ENCODE measurements at regions of chrX and their contacts with region 1.

Region 1: GRCh38 chrX:124388562-124388961 is 42.2 kb downstream of the SH2D1A start:
- DNase-seq: peak; percentile 84
- H3K4me3 Mint-ChIP-seq: no peak overlapping the region
- H3K27ac Mint-ChIP-seq: no peak overlapping the region
- H3K4me1 Mint-ChIP-seq: peaks cover 9% of the 10 kb centered on the region
- H3K27me3 Mint-ChIP-seq: no peaks in the 10 kb centered on the region

Region 2: DNA sequence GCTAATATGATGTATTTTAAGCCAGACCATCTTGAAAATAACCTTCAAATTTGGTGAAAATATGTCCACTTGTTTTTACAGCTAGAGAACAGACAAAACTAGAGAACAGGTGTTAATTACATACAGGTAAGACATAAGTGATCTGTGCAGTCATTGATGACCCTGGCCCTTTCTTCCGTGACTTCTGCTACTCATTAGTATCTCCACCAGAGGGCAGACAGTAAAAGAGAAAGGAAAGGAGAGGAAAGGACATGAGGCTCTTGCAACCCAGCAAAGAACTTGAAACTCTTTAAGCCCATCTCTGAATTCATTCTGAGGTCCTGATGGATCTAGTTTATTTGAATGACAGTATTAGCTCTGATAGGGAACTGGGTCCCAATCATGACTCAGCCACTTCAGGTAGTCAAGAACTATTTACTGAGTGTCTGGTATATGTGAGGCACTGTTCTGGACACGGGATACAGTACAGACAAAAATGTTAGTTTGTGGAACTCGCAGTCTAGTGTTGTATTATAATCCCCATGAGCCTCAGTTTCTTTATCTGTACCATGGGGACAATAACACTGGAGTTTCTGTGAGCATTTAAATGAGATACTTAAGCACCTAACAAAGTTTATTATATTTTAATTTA is 177.1 kb before region 1 on chrX:
- intact Hi-C with region 1: loop called (anchors 2 kb)
- DNase-seq: peak; percentile 79
- H3K4me3 Mint-ChIP-seq: no peak overlapping the region
- H3K27ac Mint-ChIP-seq: no peak overlapping the region
- H3K4me1 Mint-ChIP-seq: peaks cover 33% of the 10 kb centered on the region
- H3K27me3 Mint-ChIP-seq: no peaks in the 10 kb centered on the region